ENCODE measurements at regions of chr9 and their contacts with region 1.

Region 1: GRCh38 chr9:6106576-6107339 is 91.3 kb upstream of the RANBP6 start:
- DNase-seq: peak in 4 of 5 donors; percentile 15 to 35 (median 26)
- ATAC-seq: peak; percentile 93 to 95 (median 94)
- H3K4me3 ChIP-seq: no peak overlapping the region
- H3K27ac ChIP-seq: peak overlapping the region in 11 of 12 donors; percentile 41 to 83 (median 70)
- H3K4me1 ChIP-seq: peaks cover 0 to 16% (median 9%) of the 10 kb centered on the region in 12 donors
- H3K27me3 ChIP-seq: no peaks in the 10 kb centered on the region
- CTCF ChIP-seq: peak in 11 of 12 donors; percentile 28 to 65 (median 49)
- POLR2A ChIP-seq: no peak

Region 2: DNA sequence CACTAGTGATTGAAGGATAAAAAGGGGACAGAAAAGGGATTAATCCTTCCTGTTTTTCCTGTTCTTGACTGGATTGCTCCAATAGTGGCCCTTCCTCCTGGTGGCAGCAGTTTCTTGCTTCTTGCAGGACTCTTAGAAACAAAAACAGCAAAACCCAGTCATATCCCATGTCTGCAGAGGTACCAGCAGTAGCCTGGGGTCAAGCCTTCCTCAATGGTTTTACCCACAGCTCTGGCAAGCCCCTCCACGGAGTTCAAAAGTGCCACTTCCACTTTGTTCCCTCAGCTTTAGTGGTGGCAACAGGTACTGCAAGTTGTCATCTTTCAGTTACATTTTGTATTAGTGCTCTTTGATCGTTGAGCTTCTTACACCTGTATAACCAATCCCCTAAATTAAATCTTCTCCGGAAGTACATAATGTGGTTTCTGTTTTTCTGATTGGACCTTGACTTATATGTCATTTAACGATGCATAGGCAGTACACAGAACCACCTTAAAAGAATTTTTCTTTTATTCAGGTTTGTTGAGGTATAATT is 82.7 kb before region 1 on chr9:
- intact Hi-C with region 1: no loop called
- DNase-seq: no peak
- ATAC-seq: no peak
- H3K4me3 ChIP-seq: no peak overlapping the region
- H3K27ac ChIP-seq: no peak overlapping the region
- H3K4me1 ChIP-seq: no peaks in the 10 kb centered on the region
- H3K27me3 ChIP-seq: peaks cover 0 to 6% (median 0%) of the 10 kb centered on the region in 9 donors
- CTCF ChIP-seq: peak in 11 of 12 donors; percentile 13 to 70 (median 49)
- POLR2A ChIP-seq: no peak

Region 3: GRCh38 chr9:6142799-6143454 is 36.2 kb after region 1 on chr9:
- intact Hi-C with region 1: no loop called
- DNase-seq: no peak
- ATAC-seq: no peak
- H3K4me3 ChIP-seq: no peak overlapping the region
- H3K27ac ChIP-seq: no peak overlapping the region
- H3K4me1 ChIP-seq: no peaks in the 10 kb centered on the region
- H3K27me3 ChIP-seq: no peaks in the 10 kb centered on the region
- CTCF ChIP-seq: no peak
- POLR2A ChIP-seq: no peak

Region 4: DNA sequence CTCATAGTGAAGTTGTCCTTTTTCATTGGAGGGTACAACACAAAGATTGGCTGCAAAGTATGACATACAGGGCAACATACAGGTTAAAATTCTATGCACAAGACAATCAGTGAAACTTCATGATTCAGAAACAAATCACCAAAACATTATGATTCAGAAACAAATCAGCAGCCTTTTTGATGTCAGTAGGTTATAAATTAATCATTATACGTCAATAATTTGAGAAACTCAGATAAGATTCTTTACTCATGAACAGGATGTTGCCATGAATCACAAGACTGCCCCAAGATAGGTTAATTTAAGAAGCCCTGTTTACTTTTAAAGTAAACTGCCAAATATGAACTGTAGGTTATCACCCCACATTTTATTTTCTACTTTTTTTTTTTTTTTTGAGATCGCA is 46.7 kb after region 1 on chr9:
- intact Hi-C with region 1: loop called in 1 of 10 experiments (anchors 10 kb)
- DNase-seq: no peak
- ATAC-seq: no peak
- H3K4me3 ChIP-seq: no peak overlapping the region
- H3K27ac ChIP-seq: no peak overlapping the region
- H3K4me1 ChIP-seq: no peaks in the 10 kb centered on the region
- H3K27me3 ChIP-seq: no peaks in the 10 kb centered on the region
- CTCF ChIP-seq: no peak
- POLR2A ChIP-seq: no peak